Ascending aorta (tissue), 2 donors: ENCODE measurements at regions of chr4 and their contacts with region 1.

Region 1: DNA sequence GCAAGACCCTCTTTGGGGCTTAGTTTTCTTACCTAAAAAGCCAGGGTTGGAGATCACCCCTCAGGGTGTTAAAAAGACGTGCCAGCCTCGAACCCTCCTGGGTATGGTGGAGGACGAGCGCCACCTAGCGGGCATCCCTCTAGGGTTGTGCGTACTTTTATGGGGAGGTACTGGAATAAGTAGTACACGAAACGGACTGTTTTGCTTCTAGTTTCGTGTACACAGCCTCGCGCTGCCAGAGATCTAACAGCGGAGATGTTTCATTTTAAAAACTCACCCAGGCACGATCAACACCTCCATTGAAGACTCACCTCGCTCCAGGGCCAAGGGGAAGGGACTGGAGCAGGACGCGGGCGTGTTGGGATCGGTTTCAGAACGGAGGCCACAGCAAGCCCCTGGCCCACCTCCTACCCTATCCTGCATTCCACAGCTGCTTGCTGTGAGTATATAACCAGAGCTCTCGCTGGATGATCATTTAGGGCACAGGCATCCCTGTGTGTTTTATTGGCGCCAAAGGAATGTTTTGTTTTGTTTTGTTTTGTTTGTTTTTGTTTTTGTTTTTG is 4.8 kb upstream of the NKX3-2 start:
- DNase-seq: peak in 1 of 2 donors; percentile 84
- H3K4me3 ChIP-seq: peak overlapping the region; percentile 24 to 27
- H3K27ac ChIP-seq: no peak overlapping the region
- H3K4me1 ChIP-seq: peaks cover 9 to 18% of the 10 kb centered on the region in 2 donors
- H3K27me3 ChIP-seq: peaks cover 45% of the 10 kb centered on the region
- CTCF ChIP-seq: peak; percentile 72 to 89 (median 82)

Region 2: GRCh38 chr4:12729384-12729783 is 819.7 kb before region 1 on chr4:
- intact Hi-C with region 1: loop called (anchors 10 kb)
- DNase-seq: no peak
- H3K4me3 ChIP-seq: no peak overlapping the region
- H3K27ac ChIP-seq: no peak overlapping the region
- H3K4me1 ChIP-seq: no peaks in the 10 kb centered on the region
- H3K27me3 ChIP-seq: no peaks in the 10 kb centered on the region
- CTCF ChIP-seq: peak in 1 of 3 experiments; percentile 37

Region 3: DNA sequence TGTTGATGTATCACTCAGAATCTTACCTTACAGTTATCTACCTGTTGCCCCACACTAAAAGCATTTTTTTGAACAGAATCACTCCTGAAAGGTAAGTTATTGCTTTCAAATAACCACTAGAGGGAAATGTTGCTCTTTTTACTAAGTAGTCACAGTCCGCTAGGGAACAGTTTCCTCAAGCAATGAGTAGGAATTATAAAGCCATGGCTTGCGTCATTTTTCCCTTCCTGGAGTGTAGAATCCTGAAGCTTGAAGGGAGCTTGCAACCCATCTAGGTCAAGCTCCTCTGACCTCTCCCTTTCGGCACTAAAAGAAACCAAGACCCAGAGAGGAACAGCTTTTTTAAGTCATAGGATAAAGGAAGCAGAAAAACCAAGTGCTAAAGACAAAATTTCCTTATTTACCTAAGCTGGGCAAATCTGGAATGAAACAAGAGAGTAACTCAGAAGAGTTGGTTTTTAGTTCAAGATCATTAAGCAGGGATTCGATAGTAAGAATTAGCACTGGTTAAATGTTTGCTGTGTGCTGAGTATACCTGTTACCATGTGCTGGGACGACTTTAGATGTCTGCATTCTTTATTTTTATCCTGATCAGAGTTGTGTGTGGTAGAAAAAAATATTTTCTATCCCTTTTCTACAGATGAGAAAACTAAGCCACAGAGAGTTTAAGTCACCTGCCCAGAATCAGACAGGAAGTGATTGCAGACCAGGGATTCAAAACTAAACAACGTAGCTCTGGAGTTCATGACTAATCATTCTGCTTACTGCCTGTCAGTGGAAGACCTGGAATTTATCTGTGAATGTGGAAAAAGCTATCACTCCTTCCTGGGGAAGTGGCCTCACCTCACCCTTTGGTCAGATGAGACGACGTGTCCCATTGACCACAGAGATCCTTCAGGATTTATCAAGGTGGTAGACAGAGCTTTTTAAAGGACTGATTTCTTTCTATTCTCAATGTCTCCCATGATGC is 696.4 kb before region 1 on chr4:
- intact Hi-C with region 1: loop called (anchors 1 kb)
- DNase-seq: no peak
- H3K4me3 ChIP-seq: no peak overlapping the region
- H3K27ac ChIP-seq: no peak overlapping the region
- H3K4me1 ChIP-seq: peaks cover 0 to 2% of the 10 kb centered on the region in 2 donors
- H3K27me3 ChIP-seq: no peaks in the 10 kb centered on the region
- CTCF ChIP-seq: peak; percentile 29 to 69 (median 56)

Region 4: GRCh38 chr4:13597141-13597540 is 48.1 kb after region 1 on chr4:
- intact Hi-C with region 1: no loop called
- DNase-seq: no peak
- H3K4me3 ChIP-seq: no peak overlapping the region
- H3K27ac ChIP-seq: no peak overlapping the region
- H3K4me1 ChIP-seq: no peaks in the 10 kb centered on the region
- H3K27me3 ChIP-seq: no peaks in the 10 kb centered on the region
- CTCF ChIP-seq: no peak

Region 5: GRCh38 chr4:13860126-13860525 is 311.1 kb after region 1 on chr4:
- intact Hi-C with region 1: no loop called
- DNase-seq: no peak
- H3K4me3 ChIP-seq: no peak overlapping the region
- H3K27ac ChIP-seq: no peak overlapping the region
- H3K4me1 ChIP-seq: no peaks in the 10 kb centered on the region
- H3K27me3 ChIP-seq: no peaks in the 10 kb centered on the region
- CTCF ChIP-seq: no peak